Activated T-helper 2 cell treated with anti-CD3 and anti-CD28 coated beads, Interferon-gamma antibody, Interleukin-2, Interleukin-4, amounts not matched to agents 10 μg/mL and 5 μg/mL and 100 μg/mL, durations not matched to agents 14 hours and 24 hours and 36 hours (primary cell): ENCODE measurements at regions of chr12 and their contacts with region 1.

Region 1: GRCh38 chr12:122399592-122400373 is 22.7 kb downstream of the CLIP1 start:
- DNase-seq: peak; percentile 42
- H3K4me3 Mint-ChIP-seq: peak overlapping the region; percentile 62
- H3K27ac Mint-ChIP-seq: peak overlapping the region; percentile 79
- H3K4me1 Mint-ChIP-seq: peaks cover 34% of the 10 kb centered on the region
- H3K27me3 Mint-ChIP-seq: no peaks in the 10 kb centered on the region

Region 2: GRCh38 chr12:122413516-122414404 is 14.0 kb after region 1 on chr12:
- intact Hi-C with region 1: loop called (anchors 1 kb)
- DNase-seq: no peak
- H3K4me3 Mint-ChIP-seq: no peak overlapping the region
- H3K27ac Mint-ChIP-seq: peak overlapping the region; percentile 95
- H3K4me1 Mint-ChIP-seq: peaks cover 29% of the 10 kb centered on the region
- H3K27me3 Mint-ChIP-seq: no peaks in the 10 kb centered on the region

Region 3: DNA sequence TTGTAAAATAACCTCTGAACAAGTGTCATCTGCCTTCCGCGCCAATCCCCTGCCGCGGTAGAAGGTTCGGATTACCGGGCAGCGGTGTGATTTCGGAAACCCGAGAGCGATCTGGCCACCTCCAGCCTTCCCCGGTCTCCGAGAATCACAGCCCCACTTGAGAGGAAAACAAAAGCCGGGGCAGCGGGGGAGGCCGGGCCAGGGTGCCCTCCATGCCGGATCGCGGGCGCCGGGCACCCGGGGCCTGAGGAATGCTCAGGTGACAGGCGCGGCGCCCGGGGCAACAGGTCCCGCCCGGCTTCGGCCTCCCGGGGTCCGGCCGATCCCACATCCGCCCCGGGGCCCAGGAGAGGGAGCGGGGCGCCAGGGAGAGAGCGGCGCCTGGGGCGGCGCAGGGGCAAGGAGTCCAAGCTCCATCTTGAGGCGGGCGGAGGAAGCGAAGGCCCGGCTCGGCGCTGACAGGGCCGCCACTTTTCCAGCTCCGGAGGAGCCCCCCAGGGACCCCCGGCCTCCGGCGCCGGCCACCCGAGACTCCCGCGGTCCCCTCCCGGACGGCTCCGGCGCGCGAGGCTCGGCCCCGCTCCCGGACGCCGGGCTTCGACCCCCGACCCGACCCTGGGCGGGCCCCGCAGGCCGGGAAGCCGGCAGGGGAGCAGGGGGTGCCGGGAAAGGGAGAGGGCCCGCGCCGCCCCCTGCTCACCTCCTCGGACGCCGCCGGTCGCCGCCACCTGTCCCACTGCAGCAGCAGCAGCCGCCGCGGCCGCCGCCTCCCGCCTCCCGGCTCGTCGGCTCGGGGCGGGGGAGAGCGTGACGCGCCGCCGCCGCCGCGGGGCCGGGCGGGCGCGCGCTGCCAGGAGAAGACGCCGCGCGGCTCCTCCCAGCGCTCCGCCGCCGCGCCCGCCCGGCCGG is 22.3 kb after region 1 on chr12 and contains the start of gene CLIP1:
- intact Hi-C with region 1: loop called (anchors 1 kb)
- DNase-seq: peak; percentile 56
- H3K4me3 Mint-ChIP-seq: peak within 1 kb of the TSS; percentile 86
- H3K27ac Mint-ChIP-seq: peak within 1 kb of the TSS; percentile 88
- H3K4me1 Mint-ChIP-seq: peaks cover 25% of the 10 kb centered on the region
- H3K27me3 Mint-ChIP-seq: peaks cover 2% of the 10 kb centered on the region
- total RNA-seq, gene CLIP1: 59.9 and 66.2 TPM in 2 replicates

Region 4: GRCh38 chr12:122449353-122449752 is 49.6 kb after region 1 on chr12:
- intact Hi-C with region 1: loop called (anchors 1 kb)
- DNase-seq: no peak
- H3K4me3 Mint-ChIP-seq: no peak overlapping the region
- H3K27ac Mint-ChIP-seq: no peak overlapping the region
- H3K4me1 Mint-ChIP-seq: peaks cover 26% of the 10 kb centered on the region
- H3K27me3 Mint-ChIP-seq: no peaks in the 10 kb centered on the region

Region 5: DNA sequence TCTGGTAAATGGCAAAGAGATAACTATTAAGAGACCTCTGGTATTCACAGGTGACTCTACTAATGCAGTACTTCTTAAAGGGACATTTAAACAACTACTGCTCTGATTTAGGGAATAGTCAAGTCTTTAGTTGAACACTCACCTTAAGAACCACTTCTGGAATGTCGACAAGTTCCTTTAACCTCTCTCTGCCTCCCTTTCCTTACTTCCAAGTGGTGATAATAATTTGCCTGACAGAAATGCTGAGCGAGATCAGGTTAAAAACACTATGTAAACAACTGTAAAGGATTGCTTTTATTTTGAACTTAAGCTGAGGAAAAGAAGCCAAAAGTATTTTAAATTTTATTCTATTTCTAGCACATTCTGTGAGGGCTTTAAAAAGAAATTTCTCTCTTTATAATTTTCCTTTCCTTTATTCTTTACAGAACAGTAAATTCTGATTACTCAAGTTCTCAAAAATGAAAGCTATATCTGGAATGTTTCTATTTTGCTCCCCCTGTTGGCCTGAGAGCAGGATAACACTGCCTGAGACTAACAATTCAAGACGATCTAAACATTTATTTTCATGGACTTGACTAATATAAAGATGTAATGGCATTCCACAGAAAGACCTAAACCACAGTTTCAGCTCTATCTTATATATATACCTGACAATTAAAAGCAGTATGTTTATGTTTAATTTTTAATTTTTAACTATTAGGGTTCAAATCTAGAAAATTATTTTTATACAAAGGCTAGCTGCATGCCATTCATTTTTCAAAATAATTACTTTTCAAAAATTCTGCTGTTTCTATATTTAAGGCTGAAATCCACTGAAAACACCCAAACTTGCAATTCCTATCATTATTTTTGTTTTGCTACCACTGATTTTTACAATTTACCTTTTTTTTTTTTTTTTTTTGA is 71.8 kb after region 1 on chr12:
- intact Hi-C with region 1: loop called (anchors 1 kb)
- DNase-seq: no peak
- H3K4me3 Mint-ChIP-seq: no peak overlapping the region
- H3K27ac Mint-ChIP-seq: no peak overlapping the region
- H3K4me1 Mint-ChIP-seq: peaks cover 24% of the 10 kb centered on the region
- H3K27me3 Mint-ChIP-seq: no peaks in the 10 kb centered on the region